HAP-1 (cell line): ENCODE measurements at regions of chr11 and their contacts with region 1.

Region 1: GRCh38 chr11:25981998-25982397 is 349.9 kb upstream of the ANO3 start:
- DNase-seq: peak in 1 of 2 experiments; percentile 39
- H3K4me3 ChIP-seq: no peak overlapping the region
- H3K4me1 ChIP-seq: no peaks in the 10 kb centered on the region
- H3K27me3 ChIP-seq: peaks cover 10% of the 10 kb centered on the region; the same call in 1 of the 2 replicates

Region 2: DNA sequence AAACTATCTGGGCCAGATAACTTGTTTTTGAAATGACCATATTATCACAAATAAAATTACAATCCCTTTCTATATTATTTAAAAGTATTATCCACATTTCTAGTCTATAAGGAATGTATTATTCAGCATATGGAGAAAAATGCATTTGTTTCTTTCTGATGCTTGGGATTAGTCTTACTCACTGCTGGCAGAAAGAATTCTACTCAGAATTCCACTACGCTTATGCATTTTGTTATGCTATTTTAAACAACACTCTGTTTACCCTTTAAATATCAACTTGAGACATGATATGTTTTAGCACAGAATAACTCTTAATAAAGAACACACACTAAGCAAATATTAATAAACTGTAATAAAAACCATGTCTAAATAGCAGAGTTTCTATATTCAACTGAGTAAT is 272.4 kb after region 1 on chr11:
- in situ Hi-C with region 1: loop called (anchors 25 kb)
- DNase-seq: no peak
- H3K4me3 ChIP-seq: no peak overlapping the region
- H3K4me1 ChIP-seq: no peaks in the 10 kb centered on the region
- H3K27me3 ChIP-seq: peaks cover 18% of the 10 kb centered on the region